ENCODE measurements at regions of chr12 and their contacts with region 1.

Region 1: DNA sequence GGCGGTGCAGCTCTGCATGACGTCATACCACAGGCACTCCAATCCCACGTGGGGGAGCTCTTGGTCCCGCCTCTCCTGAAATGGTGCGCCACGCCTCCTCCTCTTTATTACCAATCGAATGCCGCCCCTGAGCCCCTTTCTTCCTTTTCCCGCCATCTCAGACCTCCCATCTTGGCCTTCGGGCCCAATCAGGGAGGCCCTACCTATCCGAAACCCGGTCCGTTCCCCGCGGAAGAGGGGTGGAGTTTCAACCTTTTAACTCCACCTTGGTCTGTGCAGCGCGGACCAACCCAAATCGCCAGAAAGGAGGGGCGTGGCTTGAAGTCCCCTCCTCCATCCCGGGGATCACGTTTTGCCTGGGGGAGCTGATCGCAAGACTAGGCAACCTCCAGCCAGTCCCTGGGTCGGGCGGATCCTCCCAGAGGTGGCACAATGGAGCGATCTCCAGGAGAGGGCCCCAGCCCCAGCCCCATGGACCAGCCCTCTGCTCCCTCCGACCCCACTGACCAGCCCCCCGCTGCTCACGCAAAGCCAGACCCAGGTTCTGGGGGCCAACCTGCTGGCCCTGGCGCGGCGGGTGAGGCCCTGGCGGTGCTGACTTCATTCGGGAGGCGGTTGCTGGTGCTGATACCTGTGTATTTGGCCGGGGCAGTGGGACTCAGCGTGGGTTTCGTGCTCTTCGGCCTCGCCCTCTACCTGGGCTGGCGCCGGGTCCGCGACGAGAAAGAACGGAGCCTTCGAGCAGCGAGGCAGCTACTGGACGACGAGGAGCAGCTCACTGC is at the start of gene ESYT1:
- DNase-seq: peak; percentile 100
- H3K4me3 ChIP-seq: peak within 1 kb of the TSS; percentile 72
- H3K27ac ChIP-seq: peak within 1 kb of the TSS; percentile 76
- H3K4me1 ChIP-seq: peaks cover 21% of the 10 kb centered on the region
- H3K27me3 ChIP-seq: no peaks in the 10 kb centered on the region
- CTCF ChIP-seq: no peak
- total RNA-seq, gene ESYT1: 90.0 and 107 TPM in 2 replicates

Region 2: GRCh38 chr12:56078990-56079664 is 49.0 kb before region 1 on chr12:
- CTCF ChIA-PET with region 1: interaction called, 16 read pairs
- POLR2A ChIA-PET with region 1: no interaction called
- intact Hi-C with region 1: no loop called
- DNase-seq: peak; percentile 76
- H3K4me3 ChIP-seq: peak overlapping the region; percentile 59
- H3K27ac ChIP-seq: no peak overlapping the region
- H3K4me1 ChIP-seq: no peaks in the 10 kb centered on the region
- H3K27me3 ChIP-seq: no peaks in the 10 kb centered on the region
- CTCF ChIP-seq: peak; percentile 75

Region 3: DNA sequence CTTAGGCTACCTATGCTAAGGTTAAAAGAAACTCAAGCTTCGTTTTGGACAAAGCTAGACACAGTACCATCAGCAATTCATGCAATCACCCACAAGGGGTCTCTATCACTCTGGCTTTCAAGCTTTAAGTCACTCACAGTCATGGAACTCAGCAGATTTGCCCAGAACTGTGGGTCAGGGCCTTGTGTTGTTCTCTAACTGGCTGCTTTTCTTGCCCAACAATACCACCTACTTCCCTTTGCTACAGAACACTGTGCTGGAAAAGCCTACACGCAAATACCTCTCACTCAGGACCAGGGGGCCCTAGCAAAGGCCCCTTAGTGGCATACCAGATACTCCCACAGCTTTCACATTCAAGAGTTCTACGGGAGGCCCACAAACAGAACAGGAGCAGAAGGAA is 941.4 kb after region 1 on chr12:
- CTCF ChIA-PET with region 1: no interaction called
- POLR2A ChIA-PET with region 1: no interaction called
- intact Hi-C with region 1: no loop called
- DNase-seq: peak; percentile 86
- H3K4me3 ChIP-seq: no peak overlapping the region
- H3K27ac ChIP-seq: peak overlapping the region; percentile 21
- H3K4me1 ChIP-seq: peaks cover 11% of the 10 kb centered on the region
- H3K27me3 ChIP-seq: no peaks in the 10 kb centered on the region
- CTCF ChIP-seq: peak; percentile 87

Measured in A673 (cell line).